Activated CD4-positive, alpha-beta T cell treated with anti-CD3 and anti-CD28 coated beads, Interleukin-2, amount 10 ng/mL, durations not matched to agents 24 days and 14 days (primary cell): ENCODE measurements at regions of chr4 and their contacts with region 1.

Region 1: GRCh38 chr4:179307297-179308136 is 1865.3 kb upstream of the AGA start:
- DNase-seq: peak; percentile 67
- H3K4me3 Mint-ChIP-seq: no peak overlapping the region
- H3K27ac Mint-ChIP-seq: no peak overlapping the region
- H3K4me1 Mint-ChIP-seq: no peaks in the 10 kb centered on the region
- H3K27me3 Mint-ChIP-seq: no peaks in the 10 kb centered on the region

Region 2: DNA sequence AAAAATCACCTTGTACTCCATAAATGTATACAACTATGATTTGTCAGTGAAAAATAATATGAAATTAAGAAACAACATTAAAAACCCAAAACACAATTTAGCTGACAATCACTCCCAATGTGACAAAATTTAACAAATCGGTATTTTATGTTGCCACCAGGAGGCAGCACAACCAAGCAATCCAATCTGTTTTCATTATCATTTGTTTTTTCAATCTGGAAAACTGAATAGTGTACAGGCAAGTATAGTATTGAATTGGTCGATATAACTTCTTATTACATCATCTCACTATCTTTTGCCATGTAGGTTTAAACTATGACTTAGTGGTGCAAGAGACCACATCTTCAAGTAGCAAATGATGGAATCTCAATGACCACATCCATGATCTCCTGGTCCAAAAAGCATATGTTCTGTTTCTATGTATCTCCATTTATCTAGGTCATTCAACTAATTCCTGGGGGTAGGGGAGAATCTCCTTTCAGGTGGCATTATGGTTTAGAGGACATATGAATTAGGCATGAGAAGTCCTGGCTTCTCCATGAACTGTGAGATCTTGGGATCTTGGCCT is 1752.4 kb before region 1 on chr4:
- intact Hi-C with region 1: loop called (anchors 5 kb)
- DNase-seq: peak; percentile 70
- H3K4me3 Mint-ChIP-seq: no peak overlapping the region
- H3K27ac Mint-ChIP-seq: no peak overlapping the region
- H3K4me1 Mint-ChIP-seq: no peaks in the 10 kb centered on the region
- H3K27me3 Mint-ChIP-seq: no peaks in the 10 kb centered on the region

Region 3: GRCh38 chr4:179248821-179249220 is 58.7 kb before region 1 on chr4:
- intact Hi-C with region 1: no loop called
- DNase-seq: no peak
- H3K4me3 Mint-ChIP-seq: no peak overlapping the region
- H3K27ac Mint-ChIP-seq: no peak overlapping the region
- H3K4me1 Mint-ChIP-seq: no peaks in the 10 kb centered on the region
- H3K27me3 Mint-ChIP-seq: no peaks in the 10 kb centered on the region

Region 4: GRCh38 chr4:179292468-179292867 is 15.0 kb before region 1 on chr4:
- intact Hi-C with region 1: no loop called
- DNase-seq: no peak
- H3K4me3 Mint-ChIP-seq: no peak overlapping the region
- H3K27ac Mint-ChIP-seq: no peak overlapping the region
- H3K4me1 Mint-ChIP-seq: no peaks in the 10 kb centered on the region
- H3K27me3 Mint-ChIP-seq: no peaks in the 10 kb centered on the region

Region 5: DNA sequence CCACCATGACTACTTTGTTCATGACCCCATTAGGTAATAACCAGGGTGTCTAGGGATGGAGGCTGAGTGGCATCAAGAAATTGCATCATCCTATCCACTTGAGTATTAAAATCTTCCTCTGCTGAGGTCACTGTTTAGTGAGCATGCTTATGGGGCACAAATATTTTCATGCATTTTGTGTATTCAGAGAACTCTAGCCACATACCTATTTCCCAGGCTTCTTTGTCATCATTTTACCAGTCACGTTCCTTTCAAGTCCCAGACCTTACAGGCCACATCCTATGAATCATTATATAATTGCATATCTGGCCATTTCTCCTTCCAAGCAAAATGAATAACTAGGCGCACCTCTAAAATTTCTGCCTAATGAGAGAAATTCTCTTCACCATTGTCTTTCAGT is 17.7 kb after region 1 on chr4:
- intact Hi-C with region 1: no loop called
- DNase-seq: no peak
- H3K4me3 Mint-ChIP-seq: no peak overlapping the region
- H3K27ac Mint-ChIP-seq: no peak overlapping the region
- H3K4me1 Mint-ChIP-seq: no peaks in the 10 kb centered on the region
- H3K27me3 Mint-ChIP-seq: no peaks in the 10 kb centered on the region